Gastrocnemius medialis (tissue), 4 donors: ENCODE measurements at regions of chr15 and their contacts with region 1.

Region 1: DNA sequence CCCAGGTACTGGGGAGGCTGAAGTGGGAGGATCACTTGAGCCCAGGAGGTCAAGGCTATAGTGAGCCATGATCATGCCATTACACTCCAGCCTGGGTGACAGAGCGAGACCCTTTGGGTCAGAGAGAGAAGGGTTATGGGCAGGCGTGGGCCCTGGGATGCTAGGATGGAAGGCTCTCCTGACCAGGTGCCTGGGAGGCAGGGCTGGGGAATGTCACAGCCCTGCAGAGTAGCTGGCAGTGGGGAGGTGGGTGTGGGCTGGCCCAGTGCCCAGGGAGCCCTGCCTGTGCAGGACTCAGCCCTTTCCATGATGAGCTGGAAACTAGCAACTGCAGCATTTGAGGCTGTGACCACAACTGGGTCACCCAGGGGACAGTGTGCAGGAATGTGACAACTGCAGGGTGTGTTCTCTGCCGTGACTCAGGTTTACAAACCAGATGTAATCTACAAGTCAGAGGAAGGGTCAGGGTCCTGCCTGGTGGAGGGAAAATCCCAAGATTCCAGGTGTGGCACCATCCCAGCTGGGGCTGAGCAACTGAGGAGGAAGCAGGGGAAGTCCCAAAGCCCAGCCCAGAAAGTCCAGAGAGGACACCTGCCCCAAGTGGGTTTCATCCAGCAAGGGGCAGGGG is 45.4 kb downstream of the SLC28A1 start:
- DNase-seq: no peak
- ATAC-seq: no peak
- H3K4me3 ChIP-seq: no peak overlapping the region
- H3K27ac ChIP-seq: no peak overlapping the region
- H3K4me1 ChIP-seq: peaks cover 12 to 16% of the 10 kb centered on the region in 2 donors
- H3K27me3 ChIP-seq: no peaks in the 10 kb centered on the region
- CTCF ChIP-seq: no peak
- POLR2A ChIP-seq: no peak

Region 2: GRCh38 chr15:84588053-84588874 is 341.6 kb before region 1 on chr15:
- in situ Hi-C with region 1: loop called in 2 of 4 experiments (anchors 5 kb)
- intact Hi-C with region 1: loop called (anchors 2 kb)
- DNase-seq: peak; percentile 74 to 80
- ATAC-seq: peak; percentile 94 to 95
- H3K4me3 ChIP-seq: peak overlapping the region; percentile 3 to 47 (median 40)
- H3K27ac ChIP-seq: no peak overlapping the region
- H3K4me1 ChIP-seq: peaks cover 5 to 10% of the 10 kb centered on the region in 2 donors
- H3K27me3 ChIP-seq: no peaks in the 10 kb centered on the region
- CTCF ChIP-seq: peak; percentile 40 to 98 (median 72)
- POLR2A ChIP-seq: no peak

Region 3: GRCh38 chr15:84594617-84595290 is 335.1 kb before region 1 on chr15:
- in situ Hi-C with region 1: loop called in 2 of 4 experiments (anchors 5 kb)
- intact Hi-C with region 1: loop called (anchors 2 kb)
- DNase-seq: no peak
- ATAC-seq: no peak
- H3K4me3 ChIP-seq: no peak overlapping the region
- H3K27ac ChIP-seq: no peak overlapping the region
- H3K4me1 ChIP-seq: no peaks in the 10 kb centered on the region
- H3K27me3 ChIP-seq: no peaks in the 10 kb centered on the region
- CTCF ChIP-seq: no peak
- POLR2A ChIP-seq: no peak

Region 4: GRCh38 chr15:84658080-84658787 is 271.6 kb before region 1 on chr15 and contains the start of gene NMB:
- in situ Hi-C with region 1: no loop called
- intact Hi-C with region 1: loop called (anchors 5 kb)
- DNase-seq: peak; percentile 45 to 69
- ATAC-seq: peak; percentile 49 to 51
- H3K4me3 ChIP-seq: peak within 1 kb of the TSS; percentile 54 to 85 (median 58)
- H3K27ac ChIP-seq: peak within 1 kb of the TSS; percentile 74 to 86 (median 83)
- H3K4me1 ChIP-seq: peaks cover 12 to 20% of the 10 kb centered on the region in 2 donors
- H3K27me3 ChIP-seq: no peaks in the 10 kb centered on the region
- CTCF ChIP-seq: peak; percentile 30 to 88 (median 60)
- POLR2A ChIP-seq: no peak
- total RNA-seq, gene NMB: 0.94 to 1.6 (median 1.6) TPM in 3 of 4 donors, not detected in the other

Region 5: GRCh38 chr15:84839689-84840654 is 89.9 kb before region 1 on chr15:
- in situ Hi-C with region 1: loop called in 1 of 4 experiments (anchors 5 kb)
- intact Hi-C with region 1: loop called (anchors 5 kb)
- DNase-seq: peak in 1 of 2 donors; percentile 68
- ATAC-seq: peak in 1 of 2 donors; percentile 10
- H3K4me3 ChIP-seq: peak overlapping the region in 2 of 4 donors; percentile 9 to 52
- H3K27ac ChIP-seq: peak overlapping the region; percentile 94 to 99 (median 96)
- H3K4me1 ChIP-seq: peaks cover 81 to 82% of the 10 kb centered on the region in 2 donors
- H3K27me3 ChIP-seq: no peaks in the 10 kb centered on the region
- CTCF ChIP-seq: peak in 2 of 5 experiments; percentile 25 to 38
- POLR2A ChIP-seq: no peak

Region 6: GRCh38 chr15:84863565-84864443 is 66.1 kb before region 1 on chr15:
- in situ Hi-C with region 1: no loop called
- intact Hi-C with region 1: loop called (anchors 5 kb)
- DNase-seq: no peak
- ATAC-seq: no peak
- H3K4me3 ChIP-seq: no peak overlapping the region
- H3K27ac ChIP-seq: peak overlapping the region; percentile 21 to 58 (median 45)
- H3K4me1 ChIP-seq: peaks cover 4 to 10% of the 10 kb centered on the region in 2 donors
- H3K27me3 ChIP-seq: no peaks in the 10 kb centered on the region
- CTCF ChIP-seq: no peak
- POLR2A ChIP-seq: no peak

Region 7: GRCh38 chr15:84871428-84872305 is 58.2 kb before region 1 on chr15:
- in situ Hi-C with region 1: loop called in 1 of 4 experiments (anchors 10 kb)
- intact Hi-C with region 1: loop called (anchors 5 kb)
- DNase-seq: peak; percentile 64 to 75
- ATAC-seq: peak; percentile 35 to 58
- H3K4me3 ChIP-seq: no peak overlapping the region
- H3K27ac ChIP-seq: peak overlapping the region; percentile 60 to 79 (median 76)
- H3K4me1 ChIP-seq: peaks cover 23 to 42% of the 10 kb centered on the region in 2 donors
- H3K27me3 ChIP-seq: no peaks in the 10 kb centered on the region
- CTCF ChIP-seq: peak in 3 of 5 experiments; percentile 12 to 32 (median 27)
- POLR2A ChIP-seq: peak in 1 of 2 donors; percentile 19